Sigmoid colon (tissue), 7 donors: ENCODE measurements at regions of chr10 and their contacts with region 1.

Region 1: DNA sequence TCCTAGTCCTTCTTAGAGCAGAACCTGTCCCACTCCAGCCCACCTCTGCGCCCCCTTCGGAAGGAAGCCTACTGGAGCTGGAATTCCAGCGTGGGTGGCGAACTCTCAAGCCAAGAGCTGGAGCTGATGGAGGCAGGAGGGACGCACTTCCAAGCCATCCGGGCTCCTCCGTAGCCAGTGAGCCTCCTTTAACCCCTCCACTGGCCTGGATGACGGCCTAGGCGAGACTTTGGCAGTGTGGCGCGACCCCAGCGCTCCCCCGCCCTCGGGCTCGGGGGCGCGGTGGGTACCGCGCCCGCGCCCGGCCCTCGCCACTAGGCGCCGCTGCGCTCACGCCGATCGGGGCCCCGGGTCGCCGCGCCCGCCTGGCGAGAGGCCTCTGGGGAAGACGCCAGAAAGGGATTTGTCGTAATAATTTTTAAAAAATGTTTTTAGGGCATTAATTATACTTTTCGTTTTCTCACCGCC is 5.1 kb upstream of the EMX2 start:
- DNase-seq: no peak
- H3K4me3 ChIP-seq: peak overlapping the region in 1 of 4 donors; percentile 16
- H3K27ac ChIP-seq: no peak overlapping the region
- H3K4me1 ChIP-seq: peaks cover 0 to 53% (median 43%) of the 10 kb centered on the region in 4 donors
- H3K27me3 ChIP-seq: peaks cover 67 to 100% (median 97%) of the 10 kb centered on the region in 3 donors
- CTCF ChIP-seq: peak in 2 of 4 experiments; percentile 9 to 77
- EP300 ChIP-seq: no peak
- POLR2A ChIP-seq: no peak

Region 2: DNA sequence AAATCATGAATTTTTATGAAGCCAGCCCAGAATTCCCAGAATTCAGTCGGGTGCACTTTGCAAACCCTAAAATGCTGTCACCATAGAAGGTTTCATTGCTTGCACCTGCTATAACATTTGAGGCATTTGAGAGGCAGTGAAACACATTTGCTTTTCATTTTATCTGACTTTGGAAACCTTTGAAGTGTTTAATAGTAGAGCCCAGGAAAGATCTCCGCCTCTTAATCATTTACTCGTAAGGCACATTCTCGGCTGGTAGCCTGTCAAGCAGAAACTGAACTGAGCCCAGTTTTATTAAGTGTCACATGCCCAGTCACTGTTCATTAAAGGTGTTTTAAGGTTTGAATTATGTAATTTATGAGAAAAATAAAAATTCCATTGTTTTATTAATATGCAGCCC is 252.7 kb after region 1 on chr10:
- intact Hi-C with region 1: no loop called
- DNase-seq: no peak
- H3K4me3 ChIP-seq: no peak overlapping the region
- H3K27ac ChIP-seq: no peak overlapping the region
- H3K4me1 ChIP-seq: no peaks in the 10 kb centered on the region
- H3K27me3 ChIP-seq: no peaks in the 10 kb centered on the region
- CTCF ChIP-seq: no peak
- EP300 ChIP-seq: no peak
- POLR2A ChIP-seq: no peak

Region 3: DNA sequence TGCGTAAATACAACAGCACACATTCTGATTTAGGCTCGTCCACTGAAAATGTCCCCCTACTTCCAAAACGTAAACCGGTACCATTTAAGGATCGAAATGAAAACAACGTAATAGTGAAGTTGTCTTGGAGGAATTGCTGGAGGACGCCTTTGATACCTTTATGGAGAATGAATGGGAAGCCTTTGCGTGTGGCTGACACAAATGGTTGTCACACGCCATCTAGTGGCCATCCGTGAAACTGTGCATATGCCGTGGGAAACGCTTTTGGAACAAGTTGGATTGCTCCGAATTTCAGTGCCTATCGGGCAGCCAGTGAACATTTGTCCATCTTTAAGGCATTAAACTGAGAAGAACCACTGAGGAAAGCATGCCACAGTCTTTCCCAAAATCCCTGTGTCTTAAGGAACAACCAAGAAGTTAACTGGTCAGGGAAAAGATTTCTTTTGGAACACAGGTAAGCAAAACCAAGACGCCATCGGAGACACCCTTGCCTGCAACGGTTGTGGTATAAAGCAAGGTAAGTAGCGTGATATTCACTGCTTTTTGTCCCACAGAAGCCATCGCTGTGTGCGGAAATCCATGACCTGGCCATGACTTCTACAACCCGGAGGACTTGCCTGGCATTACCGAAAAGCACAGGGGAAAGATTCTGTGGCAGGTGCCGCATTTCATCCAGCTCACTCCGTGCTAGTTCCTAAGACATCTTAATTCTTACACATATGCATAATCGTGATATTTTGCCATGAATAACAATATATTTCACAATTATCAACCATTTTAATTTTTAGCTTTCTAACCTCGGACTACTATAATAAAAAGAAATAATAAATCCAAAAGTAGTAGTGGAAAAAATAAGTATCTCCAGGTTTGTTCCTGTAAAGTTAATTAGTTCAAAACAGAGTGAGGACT is 704.0 kb after region 1 on chr10:
- intact Hi-C with region 1: loop called (anchors 2 kb)
- DNase-seq: peak; percentile 88
- H3K4me3 ChIP-seq: no peak overlapping the region
- H3K27ac ChIP-seq: no peak overlapping the region
- H3K4me1 ChIP-seq: peaks cover 0 to 6% (median 0%) of the 10 kb centered on the region in 4 donors
- H3K27me3 ChIP-seq: peaks cover 3 to 81% (median 30%) of the 10 kb centered on the region in 3 donors
- CTCF ChIP-seq: peak; percentile 57 to 92 (median 86)
- EP300 ChIP-seq: no peak
- POLR2A ChIP-seq: no peak